ENCODE measurements at regions of chr16 and their contacts with region 1.

Region 1: DNA sequence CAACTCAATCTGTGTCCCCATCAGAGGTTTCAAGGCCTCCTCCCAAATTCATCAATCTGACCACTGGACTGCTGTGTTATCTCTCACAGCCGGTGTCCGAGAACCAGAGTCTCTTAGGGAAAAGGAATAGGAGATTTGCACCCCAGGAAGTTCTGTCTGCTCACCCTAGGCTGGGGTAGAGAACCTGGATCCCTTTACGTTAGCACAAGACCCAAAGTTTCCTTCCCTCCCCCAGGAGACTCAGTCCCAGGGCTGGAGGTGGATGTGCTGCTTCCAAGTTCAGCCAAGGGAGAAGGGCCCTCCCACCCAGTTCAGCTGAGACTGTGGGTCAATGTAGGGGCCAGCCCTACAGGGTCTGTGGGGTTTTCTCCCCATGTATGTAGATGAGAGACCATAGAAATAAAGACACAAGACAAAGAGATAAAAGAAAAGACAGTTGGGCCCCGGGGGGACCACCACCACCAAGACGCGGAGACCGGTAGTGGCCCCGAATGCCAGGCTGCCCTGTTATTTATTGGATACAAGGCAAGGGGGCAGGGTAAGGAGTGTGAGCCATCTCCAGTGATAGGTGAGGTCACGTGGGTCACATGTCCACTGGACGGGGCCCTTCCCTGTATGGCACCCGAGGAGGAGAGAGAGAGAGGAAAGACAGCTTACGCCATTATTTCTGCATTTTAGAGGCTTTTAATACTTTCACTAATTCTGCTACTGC is 22.7 kb upstream of the OR1F1 start:
- DNase-seq: no peak
- H3K4me3 ChIP-seq: no peak overlapping the region
- H3K27ac ChIP-seq: no peak overlapping the region
- H3K4me1 ChIP-seq: no peaks in the 10 kb centered on the region
- H3K27me3 ChIP-seq: peaks cover under 1% of the 10 kb centered on the region
- CTCF ChIP-seq: no peak

Region 2: DNA sequence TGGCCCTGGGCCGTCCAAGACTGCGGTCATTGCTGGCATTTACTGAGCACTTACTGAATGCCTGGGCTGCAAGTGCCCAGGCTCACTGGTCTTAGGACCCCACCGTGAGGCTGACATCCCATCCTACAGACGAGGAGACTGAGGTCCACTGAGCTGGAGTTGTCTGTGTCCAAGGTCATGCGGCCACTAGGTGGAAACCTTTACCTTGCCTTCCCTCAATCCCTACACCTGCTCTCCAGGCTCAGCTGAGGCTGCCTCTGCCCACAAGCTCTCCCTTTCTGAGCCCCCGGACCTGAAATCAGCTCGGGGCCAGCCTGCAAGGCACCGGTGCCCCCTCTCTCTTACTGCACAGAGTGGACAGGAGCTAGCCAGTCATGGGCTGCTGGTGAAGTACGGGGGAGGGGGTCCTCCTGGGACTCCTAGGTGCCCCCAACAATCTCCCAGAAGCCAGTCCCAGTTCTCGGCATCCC is 970.4 kb before region 1 on chr16:
- CTCF ChIA-PET with region 1: no interaction called
- dilution Hi-C with region 1: no loop called
- in situ Hi-C with region 1: no loop called
- intact Hi-C with region 1: no loop called
- DNase-seq: peak; percentile 54
- H3K4me3 ChIP-seq: peak overlapping the region in 1 of 3 experiments; percentile 44
- H3K27ac ChIP-seq: no peak overlapping the region
- H3K4me1 ChIP-seq: peaks cover 20% of the 10 kb centered on the region
- H3K27me3 ChIP-seq: no peaks in the 10 kb centered on the region
- CTCF ChIP-seq: peak; percentile 59 to 74

Region 3: DNA sequence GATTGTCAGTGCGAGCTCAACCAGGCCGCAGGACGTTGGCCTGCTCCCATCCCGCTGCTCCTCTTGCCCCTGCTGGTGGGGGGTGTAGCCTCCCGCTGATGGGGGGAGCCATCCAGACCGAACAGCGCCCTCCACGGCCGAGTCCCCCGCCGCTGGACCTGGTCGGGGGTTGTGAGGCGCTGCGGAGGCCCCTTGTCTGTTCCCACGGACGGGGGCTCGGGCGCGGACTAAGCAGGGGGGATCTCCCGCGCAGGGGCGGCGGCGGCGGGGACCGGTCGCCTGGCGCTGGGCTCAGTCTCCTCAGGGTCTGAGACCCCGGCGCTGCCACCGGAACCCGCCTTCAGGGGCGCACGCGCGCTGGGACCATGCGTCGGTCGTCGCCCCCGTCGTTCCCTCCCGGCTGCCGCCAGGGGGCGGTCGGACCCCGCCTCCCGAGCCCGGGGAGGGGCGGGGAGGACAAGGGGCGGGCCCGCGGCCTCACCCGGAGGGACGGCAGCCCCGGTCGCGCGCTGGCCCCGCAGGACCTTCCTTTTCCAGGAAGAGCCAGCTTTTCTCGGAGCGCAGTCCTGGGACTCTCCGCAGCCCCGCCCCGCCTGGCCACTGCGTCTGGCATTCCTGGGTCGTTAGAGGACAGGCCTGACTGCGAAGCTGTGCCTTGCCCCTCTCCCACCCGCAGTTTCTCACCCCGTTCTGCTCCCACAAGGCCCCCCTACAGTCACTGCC is 106.1 kb before region 1 on chr16:
- CTCF ChIA-PET with region 1: interaction called, 3 read pairs
- dilution Hi-C with region 1: no loop called
- in situ Hi-C with region 1: no loop called
- intact Hi-C with region 1: loop called (anchors 1 kb)
- DNase-seq: peak; percentile 78
- H3K4me3 ChIP-seq: peak overlapping the region; percentile 74 to 99 (median 82)
- H3K27ac ChIP-seq: peak overlapping the region; percentile 29
- H3K4me1 ChIP-seq: peaks cover 13% of the 10 kb centered on the region
- H3K27me3 ChIP-seq: no peaks in the 10 kb centered on the region
- CTCF ChIP-seq: peak; percentile 48 to 71

Region 4: DNA sequence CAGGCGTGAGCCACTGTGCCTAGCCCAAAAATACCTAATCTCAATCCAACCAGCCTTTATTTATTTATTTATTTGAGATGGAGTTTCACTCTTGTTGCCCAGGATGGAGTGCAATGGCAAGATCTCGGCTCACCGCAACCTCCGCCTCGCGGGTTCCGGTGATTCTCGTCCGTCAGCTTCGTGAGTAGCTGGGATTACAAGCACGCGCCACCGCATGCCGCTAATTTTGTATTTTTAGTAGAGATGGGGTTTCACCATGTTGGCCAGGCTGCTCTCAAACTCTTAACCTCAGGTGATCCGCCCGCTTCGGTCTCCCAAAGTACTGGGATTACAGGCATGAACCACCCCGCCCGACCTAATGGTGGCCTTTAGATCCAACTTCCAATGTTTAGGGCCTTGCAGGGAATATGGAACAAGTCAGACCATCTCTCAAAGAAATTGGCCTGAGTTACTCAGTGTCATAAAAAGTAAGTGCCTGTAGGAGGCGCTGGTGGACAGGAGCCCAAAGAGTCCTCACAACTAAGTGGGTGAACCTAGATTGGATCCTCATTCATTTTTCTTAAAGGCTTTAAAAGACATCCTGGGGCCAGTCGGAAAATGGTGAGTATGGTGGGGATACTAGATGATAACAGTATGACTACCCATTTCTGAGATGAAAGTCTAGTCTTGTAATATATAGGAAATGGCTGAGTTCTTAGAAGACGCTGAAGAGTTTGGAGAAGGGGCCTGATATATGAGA is 70.8 kb before region 1 on chr16:
- CTCF ChIA-PET with region 1: no interaction called
- dilution Hi-C with region 1: no loop called
- in situ Hi-C with region 1: no loop called
- intact Hi-C with region 1: loop called (anchors 1 kb)
- DNase-seq: peak; percentile 37
- H3K4me3 ChIP-seq: no peak overlapping the region
- H3K27ac ChIP-seq: no peak overlapping the region
- H3K4me1 ChIP-seq: no peaks in the 10 kb centered on the region
- H3K27me3 ChIP-seq: no peaks in the 10 kb centered on the region
- CTCF ChIP-seq: peak; percentile 68 to 75

Region 5: GRCh38 chr16:3256146-3256865 is 91.0 kb after region 1 on chr16 and contains the start of gene MEFV:
- CTCF ChIA-PET with region 1: no interaction called
- dilution Hi-C with region 1: no loop called
- in situ Hi-C with region 1: no loop called
- intact Hi-C with region 1: no loop called
- DNase-seq: peak; percentile 53
- H3K4me3 ChIP-seq: no peak within 1 kb of the TSS
- H3K27ac ChIP-seq: no peak within 1 kb of the TSS
- H3K4me1 ChIP-seq: no peaks in the 10 kb centered on the region
- H3K27me3 ChIP-seq: no peaks in the 10 kb centered on the region
- CTCF ChIP-seq: no peak
- total RNA-seq, gene MEFV: not detected

Region 6: GRCh38 chr16:3348547-3349167 is 183.4 kb after region 1 on chr16:
- CTCF ChIA-PET with region 1: no interaction called
- dilution Hi-C with region 1: no loop called
- in situ Hi-C with region 1: no loop called
- intact Hi-C with region 1: no loop called
- DNase-seq: no peak
- H3K4me3 ChIP-seq: no peak overlapping the region
- H3K27ac ChIP-seq: no peak overlapping the region
- H3K4me1 ChIP-seq: no peaks in the 10 kb centered on the region
- H3K27me3 ChIP-seq: no peaks in the 10 kb centered on the region
- CTCF ChIP-seq: no peak

Measured in mammary epithelial cell (primary cell).